ENCODE measurements at regions of chr20 and their contacts with region 1.

Region 1: GRCh38 chr20:1108437-1108920 is 9.9 kb upstream of the PSMF1 start:
- H3K4me3 ChIP-seq: no peak overlapping the region
- H3K27ac ChIP-seq: no peak overlapping the region
- H3K4me1 ChIP-seq: no peaks in the 10 kb centered on the region
- CTCF ChIP-seq: peak; percentile 45

Region 2: DNA sequence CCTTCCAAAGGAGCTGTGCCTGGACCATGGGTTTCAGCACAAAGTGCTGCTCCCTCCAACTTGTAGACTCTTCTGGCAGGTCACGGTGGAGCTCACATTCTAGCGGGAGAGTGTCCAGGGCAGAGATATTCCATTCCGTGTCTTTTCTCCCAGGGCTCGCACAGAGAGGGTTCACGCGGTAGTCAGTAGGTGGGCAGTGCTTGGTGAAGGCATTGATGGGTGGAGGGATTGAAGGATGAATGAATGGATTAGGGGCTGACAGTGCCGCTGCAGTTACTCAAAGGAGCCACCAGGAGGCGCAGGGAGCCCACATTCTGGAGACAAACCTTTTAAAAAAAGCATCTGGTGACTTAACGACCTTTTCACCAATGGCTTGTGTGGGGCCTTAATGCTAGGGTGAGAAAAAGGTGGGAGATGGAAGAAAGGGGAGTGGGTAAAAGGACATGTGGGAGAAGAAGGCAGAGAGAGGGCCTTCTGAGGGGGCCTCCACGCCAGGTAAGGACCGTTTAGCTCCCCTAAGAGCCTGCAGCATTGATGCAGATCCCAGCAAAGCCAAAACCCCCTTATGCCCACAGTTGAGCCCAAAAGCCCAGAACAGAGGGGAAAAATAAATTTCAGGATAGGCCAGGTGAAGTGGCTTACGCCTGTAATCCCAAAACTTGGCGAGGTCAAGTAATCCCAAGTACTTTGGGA is 292.4 kb before region 1 on chr20:
- CTCF ChIA-PET with region 1: interaction called, 21 read pairs
- POLR2A ChIA-PET with region 1: no interaction called
- H3K4me3 ChIP-seq: no peak overlapping the region
- H3K27ac ChIP-seq: no peak overlapping the region
- H3K4me1 ChIP-seq: no peaks in the 10 kb centered on the region
- CTCF ChIP-seq: peak; percentile 86

Region 3: DNA sequence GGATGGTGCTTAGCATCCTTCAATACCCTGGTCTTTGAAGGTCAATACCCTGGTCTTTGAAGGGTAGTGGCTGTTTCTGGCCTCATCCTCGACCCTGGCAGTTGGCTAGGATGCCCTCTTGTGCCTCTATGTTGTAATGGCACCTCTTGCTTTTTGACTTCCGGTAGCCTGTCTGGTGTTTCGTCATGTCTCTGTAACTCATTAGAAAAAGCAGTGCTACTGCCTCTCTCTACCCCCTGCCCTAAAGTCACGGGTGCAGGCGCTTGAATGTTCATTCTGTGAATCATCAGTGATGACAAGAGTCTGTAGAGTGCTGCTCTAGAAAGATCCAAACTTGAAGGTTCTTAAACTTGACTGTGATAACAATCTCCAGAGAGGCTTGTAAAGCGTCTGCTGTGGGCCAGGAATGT is 134.7 kb before region 1 on chr20:
- CTCF ChIA-PET with region 1: interaction called, 12 read pairs
- POLR2A ChIA-PET with region 1: no interaction called
- H3K4me3 ChIP-seq: no peak overlapping the region
- H3K27ac ChIP-seq: no peak overlapping the region
- H3K4me1 ChIP-seq: no peaks in the 10 kb centered on the region; the same call in 1 of the 2 replicates
- CTCF ChIP-seq: 0 out of 2 replicates have a peak, but pooled peaks have one; percentile 24

Region 4: GRCh38 chr20:986733-987355 is 121.6 kb before region 1 on chr20:
- CTCF ChIA-PET with region 1: no interaction called
- POLR2A ChIA-PET with region 1: no interaction called
- H3K4me3 ChIP-seq: no peak overlapping the region
- H3K27ac ChIP-seq: no peak overlapping the region
- H3K4me1 ChIP-seq: no peaks in the 10 kb centered on the region
- CTCF ChIP-seq: no peak

Region 5: DNA sequence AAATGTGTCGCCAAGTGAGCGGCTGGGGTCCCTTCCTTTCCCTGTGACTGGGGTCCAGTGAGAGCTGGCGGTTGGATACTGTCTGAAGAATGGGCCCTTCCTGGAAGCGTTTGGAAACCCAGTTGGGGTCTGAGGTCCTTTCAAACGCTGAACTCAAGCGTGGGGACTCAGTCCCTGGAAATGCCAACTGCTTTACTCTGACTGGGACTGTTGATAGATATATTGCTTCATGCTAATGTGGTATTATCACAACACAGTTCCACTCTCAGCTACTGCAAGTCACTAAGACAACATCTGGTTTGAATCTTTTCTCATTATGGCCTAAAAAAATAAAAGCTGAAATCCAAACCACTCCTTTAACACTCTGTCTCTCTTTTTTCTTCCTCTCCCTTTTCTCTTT is 13.7 kb before region 1 on chr20:
- CTCF ChIA-PET with region 1: interaction called, 29 read pairs
- POLR2A ChIA-PET with region 1: no interaction called
- H3K4me3 ChIP-seq: no peak overlapping the region
- H3K27ac ChIP-seq: no peak overlapping the region
- H3K4me1 ChIP-seq: no peaks in the 10 kb centered on the region
- CTCF ChIP-seq: no peak

Region 6: DNA sequence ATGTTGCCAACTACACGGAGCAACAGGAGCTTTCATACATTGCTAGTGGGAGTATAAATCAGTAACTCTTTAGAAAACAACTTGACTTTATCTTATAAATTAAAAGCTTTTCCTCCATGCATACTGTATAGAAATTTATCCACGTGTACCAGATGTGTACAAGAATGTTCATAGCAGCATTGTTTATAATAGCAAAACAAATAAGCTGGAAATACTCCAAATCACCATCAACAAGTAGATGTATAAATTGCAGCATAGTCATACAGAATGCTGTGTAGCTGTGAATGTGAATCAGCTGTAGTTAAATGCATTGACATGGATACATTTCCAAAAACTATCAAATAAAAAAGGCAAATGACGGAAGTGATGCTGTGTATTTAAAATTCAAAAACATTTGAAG is 15.9 kb after region 1 on chr20:
- CTCF ChIA-PET with region 1: interaction called, 20 read pairs
- POLR2A ChIA-PET with region 1: no interaction called
- H3K4me3 ChIP-seq: no peak overlapping the region
- H3K27ac ChIP-seq: no peak overlapping the region
- H3K4me1 ChIP-seq: peaks cover 34% of the 10 kb centered on the region
- CTCF ChIP-seq: no peak

Region 7: GRCh38 chr20:1154691-1155090 is 46.2 kb after region 1 on chr20:
- CTCF ChIA-PET with region 1: no interaction called
- POLR2A ChIA-PET with region 1: no interaction called
- H3K4me3 ChIP-seq: no peak overlapping the region
- H3K27ac ChIP-seq: no peak overlapping the region
- H3K4me1 ChIP-seq: no peaks in the 10 kb centered on the region
- CTCF ChIP-seq: no peak